ENCODE measurements at regions of chr3 and their contacts with region 1.

Region 1: GRCh38 chr3:187164885-187165543 is 25.7 kb upstream of the RPL39L start:
- DNase-seq: no peak
- H3K4me3 ChIP-seq: no peak overlapping the region
- H3K27ac ChIP-seq: no peak overlapping the region
- H3K4me1 ChIP-seq: peaks cover 0 to 12% (median 6%) of the 10 kb centered on the region in 4 donors
- H3K27me3 ChIP-seq: no peaks in the 10 kb centered on the region
- CTCF ChIP-seq: peak; percentile 63 to 71

Region 2: DNA sequence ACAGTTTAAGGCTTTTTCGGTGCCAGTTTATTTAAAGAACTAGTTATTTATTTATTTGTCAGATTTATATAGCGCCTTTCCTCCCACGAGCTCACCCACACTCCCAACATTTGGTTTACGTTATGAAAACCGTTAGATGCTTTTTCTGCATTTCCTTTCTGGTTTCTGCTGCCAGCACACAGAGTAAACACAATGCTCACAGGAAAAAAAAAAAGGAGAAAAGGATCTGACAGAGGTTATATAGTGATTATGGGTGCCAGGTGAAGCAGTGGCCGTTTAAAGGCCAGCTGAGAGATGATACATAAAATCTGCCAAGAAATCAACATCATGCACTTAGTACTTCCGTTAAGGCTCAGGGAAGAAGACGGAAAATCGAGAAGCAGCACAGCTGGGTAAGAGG is 1094.0 kb before region 1 on chr3:
- intact Hi-C with region 1: no loop called
- DNase-seq: no peak
- H3K4me3 ChIP-seq: no peak overlapping the region
- H3K27ac ChIP-seq: no peak overlapping the region
- H3K4me1 ChIP-seq: no peaks in the 10 kb centered on the region
- H3K27me3 ChIP-seq: no peaks in the 10 kb centered on the region
- CTCF ChIP-seq: no peak

Region 3: DNA sequence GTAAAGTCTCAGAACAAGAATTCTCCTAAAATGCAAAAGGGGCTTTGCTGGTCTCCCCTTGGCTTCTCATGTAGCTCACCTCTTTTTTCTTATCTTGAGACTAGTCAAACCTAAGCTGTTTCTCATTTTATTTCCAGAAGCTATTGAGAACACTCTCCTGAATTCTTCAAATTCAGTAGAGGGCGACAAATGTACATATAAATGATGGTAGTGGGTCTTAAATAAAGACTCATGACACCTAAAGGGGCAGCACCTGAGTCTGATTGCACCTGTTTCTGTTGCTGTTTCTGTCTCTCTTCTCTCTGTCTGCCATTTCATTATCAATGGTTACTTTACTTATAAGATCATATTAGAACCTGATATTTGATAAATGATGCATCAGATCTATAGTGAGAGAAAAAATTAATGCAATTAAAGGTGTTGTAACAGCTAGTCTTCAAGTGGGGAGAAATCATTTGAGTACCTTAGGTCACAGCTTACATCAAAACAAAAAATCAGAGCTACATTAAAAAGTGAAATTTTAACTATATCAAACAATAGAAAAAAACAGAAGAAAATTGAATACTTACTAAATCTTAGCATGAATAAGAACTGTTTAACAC is 315.5 kb before region 1 on chr3:
- intact Hi-C with region 1: loop called (anchors 5 kb)
- DNase-seq: no peak
- H3K4me3 ChIP-seq: no peak overlapping the region
- H3K27ac ChIP-seq: no peak overlapping the region
- H3K4me1 ChIP-seq: no peaks in the 10 kb centered on the region
- H3K27me3 ChIP-seq: peaks cover 0 to 7% of the 10 kb centered on the region in 2 donors
- CTCF ChIP-seq: peak; percentile 37 to 41

Region 4: DNA sequence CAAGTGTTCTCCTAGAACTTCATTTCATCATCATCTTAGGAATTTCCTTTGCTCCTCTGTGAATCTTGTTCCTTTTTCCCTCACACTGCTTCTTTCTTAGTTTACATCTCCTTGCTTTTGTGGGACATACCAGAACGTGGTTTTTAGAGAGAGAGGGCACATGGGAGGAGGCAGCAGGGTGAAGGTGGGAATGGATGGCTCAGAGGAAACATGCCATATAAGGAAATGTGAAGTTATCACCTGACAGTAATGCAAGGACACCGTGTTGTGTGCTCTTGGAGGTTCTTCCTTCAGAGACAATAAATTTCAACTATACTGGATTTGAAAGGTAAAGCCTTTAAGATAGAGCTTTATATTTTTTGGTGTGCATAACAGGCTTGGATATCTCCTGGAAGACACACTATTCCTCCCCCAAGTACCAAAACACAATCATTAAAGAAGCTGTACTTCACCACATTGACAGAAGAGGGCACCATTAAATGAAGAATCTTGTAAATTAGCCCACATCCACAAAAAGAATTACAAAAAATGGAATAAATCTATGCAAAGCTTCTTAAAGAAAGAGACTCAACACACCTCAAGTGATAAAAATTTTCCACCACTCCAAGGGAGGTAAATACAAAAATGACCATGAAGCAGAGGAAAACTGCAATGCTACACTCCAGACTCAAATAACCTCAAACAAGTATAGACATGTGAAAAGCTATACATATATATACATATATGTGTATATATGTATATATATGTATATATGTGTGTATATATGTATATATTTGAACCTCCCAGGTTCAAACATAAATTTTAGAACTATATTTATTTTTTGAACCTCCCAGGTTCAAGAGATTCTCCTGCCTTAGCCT is 51.9 kb before region 1 on chr3:
- intact Hi-C with region 1: loop called (anchors 10 kb)
- DNase-seq: no peak
- H3K4me3 ChIP-seq: no peak overlapping the region
- H3K27ac ChIP-seq: peak overlapping the region; percentile 21 to 39
- H3K4me1 ChIP-seq: peaks cover 0 to 21% (median 11%) of the 10 kb centered on the region in 4 donors
- H3K27me3 ChIP-seq: no peaks in the 10 kb centered on the region
- CTCF ChIP-seq: peak; percentile 59 to 66